ENCODE measurements at regions of chr9 and their contacts with region 1.

Region 1: GRCh38 chr9:126500684-126501382 is 112.9 kb upstream of the LMX1B start:
- DNase-seq: peak; percentile 42 to 81 (median 66)
- ATAC-seq: peak; percentile 67
- H3K4me3 ChIP-seq: no peak overlapping the region
- H3K4me3 Mint-ChIP-seq: peak overlapping the region; percentile 55
- H3K27ac ChIP-seq: no peak overlapping the region
- H3K27ac Mint-ChIP-seq: no peak overlapping the region
- H3K4me1 ChIP-seq: peaks cover 13% of the 10 kb centered on the region
- H3K4me1 Mint-ChIP-seq: peaks cover 20% of the 10 kb centered on the region
- H3K27me3 ChIP-seq: peaks cover 0 to 2% of the 10 kb centered on the region in 2 experiments
- H3K27me3 Mint-ChIP-seq: peaks cover 2% of the 10 kb centered on the region
- CTCF ChIP-seq: peak; percentile 94

Region 2: GRCh38 chr9:126317513-126317912 is 183.3 kb before region 1 on chr9:
- CTCF ChIA-PET with region 1: interaction called, 14 read pairs
- POLR2A ChIA-PET with region 1: no interaction called
- intact Hi-C with region 1: no loop called
- DNase-seq: peak; percentile 30 to 78 (median 62)
- ATAC-seq: peak; percentile 92
- H3K4me3 ChIP-seq: no peak overlapping the region
- H3K4me3 Mint-ChIP-seq: no peak overlapping the region
- H3K27ac ChIP-seq: no peak overlapping the region
- H3K27ac Mint-ChIP-seq: no peak overlapping the region
- H3K4me1 ChIP-seq: peaks cover 3% of the 10 kb centered on the region
- H3K4me1 Mint-ChIP-seq: peaks cover 14% of the 10 kb centered on the region
- H3K27me3 ChIP-seq: no peaks in the 10 kb centered on the region
- H3K27me3 Mint-ChIP-seq: no peaks in the 10 kb centered on the region
- CTCF ChIP-seq: peak; percentile 71

Region 3: DNA sequence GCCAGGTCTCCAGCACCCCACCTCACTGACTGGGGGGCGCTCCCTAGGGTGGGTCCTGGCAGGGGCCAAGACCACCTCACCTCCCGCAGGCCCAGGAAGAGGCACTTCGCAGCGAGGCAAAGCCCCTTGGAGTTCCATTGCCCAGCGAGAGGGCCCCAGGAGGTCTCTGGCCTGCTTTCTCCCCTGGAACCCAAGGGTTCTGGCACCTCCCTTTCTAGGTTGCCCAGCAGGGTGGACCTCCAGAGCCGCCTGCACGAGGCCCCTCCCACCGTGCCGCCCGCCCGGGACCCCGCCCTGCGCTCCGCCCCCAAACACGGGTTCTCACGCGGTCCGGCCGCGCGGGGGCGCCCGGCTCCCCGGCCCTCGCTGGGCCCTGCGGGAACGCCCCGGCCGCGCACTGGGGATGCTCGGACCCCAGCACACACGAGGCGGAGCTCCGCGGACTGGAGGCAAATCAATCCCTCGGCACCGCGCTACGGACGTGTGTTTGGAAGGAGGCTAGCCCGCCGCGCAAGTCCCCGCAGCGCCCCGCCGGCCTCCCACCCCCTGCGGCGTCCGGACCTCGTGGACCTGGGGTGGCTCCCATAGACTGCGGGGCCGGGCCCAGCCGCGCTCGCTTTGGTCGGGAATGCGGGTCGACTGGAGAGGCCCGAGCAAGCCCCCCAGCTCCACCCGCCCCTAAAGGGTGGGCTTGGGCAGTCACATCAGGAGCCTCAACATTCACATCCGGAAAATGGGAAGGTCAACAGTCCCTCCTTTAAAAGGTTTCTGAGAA is 13.4 kb after region 1 on chr9:
- CTCF ChIA-PET with region 1: interaction called, 150 read pairs
- POLR2A ChIA-PET with region 1: interaction called, 3 read pairs
- intact Hi-C with region 1: no loop called
- DNase-seq: peak; percentile 29 to 78 (median 58)
- ATAC-seq: peak; percentile 89
- H3K4me3 ChIP-seq: no peak overlapping the region
- H3K4me3 Mint-ChIP-seq: peak overlapping the region; percentile 8
- H3K27ac ChIP-seq: no peak overlapping the region
- H3K27ac Mint-ChIP-seq: no peak overlapping the region
- H3K4me1 ChIP-seq: peaks cover 17% of the 10 kb centered on the region
- H3K4me1 Mint-ChIP-seq: peaks cover 28% of the 10 kb centered on the region
- H3K27me3 ChIP-seq: peaks cover 9 to 15% of the 10 kb centered on the region in 2 experiments
- H3K27me3 Mint-ChIP-seq: peaks cover 56% of the 10 kb centered on the region
- CTCF ChIP-seq: peak; percentile 34

Region 4: GRCh38 chr9:126558051-126558665 is 57.3 kb after region 1 on chr9:
- CTCF ChIA-PET with region 1: interaction called, 187 read pairs
- POLR2A ChIA-PET with region 1: no interaction called
- intact Hi-C with region 1: loop called (anchors 1 kb)
- DNase-seq: peak; percentile 33 to 85 (median 68)
- ATAC-seq: peak; percentile 88
- H3K4me3 ChIP-seq: no peak overlapping the region
- H3K4me3 Mint-ChIP-seq: no peak overlapping the region
- H3K27ac ChIP-seq: no peak overlapping the region
- H3K27ac Mint-ChIP-seq: no peak overlapping the region
- H3K4me1 ChIP-seq: no peaks in the 10 kb centered on the region
- H3K4me1 Mint-ChIP-seq: no peaks in the 10 kb centered on the region
- H3K27me3 ChIP-seq: peaks cover 3 to 4% of the 10 kb centered on the region in 2 experiments
- H3K27me3 Mint-ChIP-seq: peaks cover 27% of the 10 kb centered on the region
- CTCF ChIP-seq: peak; percentile 80

Region 5: DNA sequence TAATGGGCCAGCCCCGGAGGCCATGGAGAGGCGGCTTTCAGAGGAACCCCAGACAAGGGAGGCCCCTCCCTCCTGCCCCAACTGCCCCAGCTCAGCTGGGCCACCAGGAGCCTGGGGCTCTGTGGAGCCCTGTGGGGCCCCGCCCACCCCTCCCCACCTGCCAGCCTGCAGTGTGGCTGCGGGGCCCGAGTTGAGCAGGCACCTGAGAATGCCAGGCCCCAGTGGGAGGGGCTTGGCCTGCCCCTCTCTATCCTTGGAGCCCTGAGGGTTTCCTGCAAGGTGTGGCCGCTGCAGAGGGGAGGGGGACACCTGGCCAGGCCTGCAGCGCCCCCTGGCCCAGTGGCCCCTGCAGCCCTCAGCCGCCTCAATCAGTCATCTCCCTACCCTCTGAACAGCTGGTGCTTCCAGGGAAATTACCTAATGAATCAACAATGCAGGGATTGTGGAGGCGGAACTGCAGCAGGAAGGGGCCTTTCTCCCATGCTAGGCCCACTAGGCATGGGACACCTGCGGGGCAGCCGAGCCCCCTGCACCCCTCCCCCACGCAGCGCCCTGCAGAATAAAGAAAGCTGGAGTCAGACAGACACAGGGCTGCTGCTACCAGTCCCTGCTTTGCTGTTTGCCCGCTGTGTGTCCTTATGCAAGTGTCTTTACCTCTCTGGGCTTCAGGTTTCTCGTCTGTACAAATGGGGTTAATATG is 160.8 kb after region 1 on chr9:
- CTCF ChIA-PET with region 1: no interaction called
- POLR2A ChIA-PET with region 1: no interaction called
- intact Hi-C with region 1: no loop called
- DNase-seq: no peak
- ATAC-seq: no peak
- H3K4me3 ChIP-seq: no peak overlapping the region
- H3K4me3 Mint-ChIP-seq: no peak overlapping the region
- H3K27ac ChIP-seq: no peak overlapping the region
- H3K27ac Mint-ChIP-seq: no peak overlapping the region
- H3K4me1 ChIP-seq: no peaks in the 10 kb centered on the region
- H3K4me1 Mint-ChIP-seq: no peaks in the 10 kb centered on the region
- H3K27me3 ChIP-seq: peaks cover 0 to 9% of the 10 kb centered on the region in 2 experiments
- H3K27me3 Mint-ChIP-seq: peaks cover 32% of the 10 kb centered on the region
- CTCF ChIP-seq: no peak

Measured in CD8-positive, alpha-beta T cell (primary cell).